ENCODE measurements at regions of chr13 and their contacts with region 1.

Region 1: DNA sequence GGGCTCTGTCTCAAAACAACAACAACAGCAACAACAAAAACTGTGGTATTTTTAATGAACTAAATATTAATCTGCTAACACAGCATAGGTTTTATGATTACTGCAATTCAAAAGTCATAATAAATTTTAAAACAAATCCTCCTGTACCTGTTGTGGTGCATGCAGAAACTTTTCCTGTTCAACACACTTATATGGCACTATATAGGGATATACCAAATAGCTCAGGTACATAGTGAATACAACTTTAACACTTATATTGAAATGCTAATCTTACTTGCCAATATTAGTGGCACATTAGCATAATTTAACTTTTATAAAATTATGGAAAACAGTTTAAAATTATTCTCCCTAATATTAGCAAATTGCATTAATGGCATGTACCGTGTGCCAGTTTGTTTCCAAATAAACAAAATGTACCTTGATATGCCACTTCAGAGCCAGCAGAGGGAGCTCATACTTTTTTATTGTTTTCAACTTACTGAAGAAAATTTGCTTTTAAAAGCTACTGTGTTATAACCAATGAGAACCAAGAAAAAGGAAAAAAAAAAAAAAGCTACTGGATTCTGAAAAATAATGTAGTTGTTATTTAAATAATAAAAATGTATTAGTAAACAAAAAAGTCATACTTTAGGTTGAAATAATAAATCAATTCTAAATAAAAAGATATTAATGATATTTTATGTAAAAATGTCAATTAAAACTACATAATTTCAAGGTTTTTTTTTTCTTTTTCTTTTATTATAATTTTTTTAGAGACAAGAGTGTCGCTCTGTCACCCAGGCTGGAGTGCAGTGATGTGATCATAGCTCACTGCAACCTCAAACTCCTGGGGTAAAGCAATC is 18.0 kb upstream of the RBM26 start:
- DNase-seq: peak in 1 of 4 donors; percentile 14
- ATAC-seq: peak; percentile 74
- H3K4me3 ChIP-seq: no peak overlapping the region
- H3K27ac ChIP-seq: no peak overlapping the region
- H3K4me1 ChIP-seq: no peaks in the 10 kb centered on the region
- H3K27me3 ChIP-seq: no peaks in the 10 kb centered on the region
- CTCF ChIP-seq: peak in 6 of 7 experiments; percentile 45 to 81 (median 71)
- POLR2A ChIP-seq: no peak

Region 2: GRCh38 chr13:79149210-79149609 is 274.8 kb before region 1 on chr13:
- intact Hi-C with region 1: no loop called
- DNase-seq: no peak
- ATAC-seq: no peak
- H3K4me3 ChIP-seq: no peak overlapping the region
- H3K27ac ChIP-seq: no peak overlapping the region
- H3K4me1 ChIP-seq: no peaks in the 10 kb centered on the region
- H3K27me3 ChIP-seq: no peaks in the 10 kb centered on the region
- CTCF ChIP-seq: no peak
- POLR2A ChIP-seq: no peak

Region 3: GRCh38 chr13:79538757-79539156 is 114.7 kb after region 1 on chr13:
- intact Hi-C with region 1: loop called (anchors 5 kb)
- DNase-seq: no peak
- ATAC-seq: no peak
- H3K4me3 ChIP-seq: no peak overlapping the region
- H3K27ac ChIP-seq: no peak overlapping the region
- H3K4me1 ChIP-seq: peaks cover 7% of the 10 kb centered on the region
- H3K27me3 ChIP-seq: no peaks in the 10 kb centered on the region
- CTCF ChIP-seq: no peak
- POLR2A ChIP-seq: no peak